ENCODE measurements at regions of chr12 and their contacts with region 1.

Region 1: DNA sequence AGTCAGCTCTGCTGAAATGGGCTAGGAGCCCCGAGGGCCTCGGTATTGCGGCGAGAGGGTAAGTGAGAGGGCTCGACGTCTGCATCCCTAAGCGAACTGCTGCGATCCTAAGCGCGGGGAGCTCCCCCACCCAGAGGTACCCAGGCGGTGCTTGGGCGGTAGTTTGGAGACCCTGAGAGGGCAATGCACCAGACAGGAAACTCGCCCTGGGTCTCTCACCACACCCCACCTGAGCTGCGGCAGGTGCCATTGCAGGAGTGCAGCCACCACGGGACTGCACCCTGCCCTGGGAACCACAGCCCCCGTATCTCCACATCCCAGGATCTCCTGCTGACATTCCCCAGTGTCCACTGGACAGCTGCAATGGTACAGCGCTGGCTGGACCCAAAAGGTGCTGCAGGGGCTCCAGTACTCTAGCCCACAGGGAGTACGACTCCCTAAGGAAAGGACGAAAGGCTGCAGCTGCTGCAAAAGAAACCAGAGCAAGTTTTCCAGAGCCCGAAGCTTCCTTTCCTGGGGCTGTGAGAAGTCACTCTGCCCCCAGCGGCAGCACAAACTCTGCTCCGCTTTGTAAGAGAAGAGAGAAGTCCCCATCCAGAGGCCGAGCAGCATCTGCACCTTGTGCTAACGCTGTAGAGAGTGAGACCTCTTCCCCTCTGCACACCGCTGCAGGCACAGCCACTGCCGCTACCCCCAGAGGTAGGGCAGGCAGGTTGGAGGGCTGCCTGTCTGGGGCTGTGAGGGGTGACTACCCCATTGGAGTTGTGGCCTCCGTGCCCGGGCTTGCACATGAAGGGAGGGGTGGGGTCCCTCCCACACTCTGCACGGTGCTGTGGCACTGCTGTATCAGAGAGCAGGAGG is 31.1 kb upstream of the MON2 start:
- DNase-seq: peak; percentile 8 to 38 (median 26)
- ATAC-seq: peak; percentile 77
- H3K4me3 ChIP-seq: peak overlapping the region; percentile 71
- H3K4me3 Mint-ChIP-seq: peak overlapping the region; percentile 79 to 93 (median 89)
- H3K27ac ChIP-seq: no peak overlapping the region
- H3K27ac Mint-ChIP-seq: peak overlapping the region in 3 of 9 donors; percentile 33 to 71 (median 36)
- H3K4me1 ChIP-seq: peaks cover 9 to 10% of the 10 kb centered on the region in 2 donors
- H3K4me1 Mint-ChIP-seq: peaks cover 9 to 24% (median 18%) of the 10 kb centered on the region in 7 donors
- H3K27me3 ChIP-seq: no peaks in the 10 kb centered on the region
- H3K27me3 Mint-ChIP-seq: peaks cover 19 to 67% (median 29%) of the 10 kb centered on the region in 5 donors

Region 2: GRCh38 chr12:61798778-61799177 is 636.8 kb before region 1 on chr12:
- CTCF ChIA-PET with region 1: no interaction called
- POLR2A ChIA-PET with region 1: no interaction called
- intact Hi-C with region 1: no loop called
- DNase-seq: no peak
- ATAC-seq: no peak
- H3K4me3 ChIP-seq: no peak overlapping the region
- H3K4me3 Mint-ChIP-seq: no peak overlapping the region
- H3K27ac ChIP-seq: no peak overlapping the region
- H3K27ac Mint-ChIP-seq: no peak overlapping the region
- H3K4me1 ChIP-seq: no peaks in the 10 kb centered on the region
- H3K4me1 Mint-ChIP-seq: no peaks in the 10 kb centered on the region
- H3K27me3 ChIP-seq: no peaks in the 10 kb centered on the region
- H3K27me3 Mint-ChIP-seq: no peaks in the 10 kb centered on the region

Region 3: DNA sequence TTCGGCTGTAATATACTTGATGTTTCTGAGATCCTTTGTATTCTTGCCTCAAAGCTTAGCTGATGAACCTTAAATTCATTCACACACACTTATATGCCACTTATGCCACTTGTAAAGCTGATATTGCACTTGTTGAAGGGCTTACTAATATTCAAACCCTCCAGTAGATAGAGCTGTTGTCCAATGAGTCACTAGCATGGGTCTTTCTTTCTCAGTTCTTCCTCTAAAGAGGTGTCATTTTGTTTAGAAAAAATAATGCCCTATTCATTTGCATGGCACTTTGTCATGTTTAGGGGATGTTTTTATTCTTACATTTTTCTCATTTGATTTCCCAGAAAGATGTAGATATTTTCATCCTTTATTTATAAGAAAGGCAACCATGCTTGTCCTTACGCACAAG is 87.5 kb after region 1 on chr12:
- CTCF ChIA-PET with region 1: no interaction called
- POLR2A ChIA-PET with region 1: no interaction called
- intact Hi-C with region 1: loop called in 1 of 2 experiments (anchors 2 kb)
- DNase-seq: no peak
- ATAC-seq: peak; percentile 31
- H3K4me3 ChIP-seq: no peak overlapping the region
- H3K4me3 Mint-ChIP-seq: no peak overlapping the region
- H3K27ac ChIP-seq: no peak overlapping the region
- H3K27ac Mint-ChIP-seq: peak overlapping the region in 5 of 9 donors; percentile 23 to 82 (median 67)
- H3K4me1 ChIP-seq: peaks cover 0 to 7% of the 10 kb centered on the region in 2 donors
- H3K4me1 Mint-ChIP-seq: peaks cover 13 to 64% (median 59%) of the 10 kb centered on the region in 7 donors
- H3K27me3 ChIP-seq: no peaks in the 10 kb centered on the region
- H3K27me3 Mint-ChIP-seq: no peaks in the 10 kb centered on the region

Region 4: DNA sequence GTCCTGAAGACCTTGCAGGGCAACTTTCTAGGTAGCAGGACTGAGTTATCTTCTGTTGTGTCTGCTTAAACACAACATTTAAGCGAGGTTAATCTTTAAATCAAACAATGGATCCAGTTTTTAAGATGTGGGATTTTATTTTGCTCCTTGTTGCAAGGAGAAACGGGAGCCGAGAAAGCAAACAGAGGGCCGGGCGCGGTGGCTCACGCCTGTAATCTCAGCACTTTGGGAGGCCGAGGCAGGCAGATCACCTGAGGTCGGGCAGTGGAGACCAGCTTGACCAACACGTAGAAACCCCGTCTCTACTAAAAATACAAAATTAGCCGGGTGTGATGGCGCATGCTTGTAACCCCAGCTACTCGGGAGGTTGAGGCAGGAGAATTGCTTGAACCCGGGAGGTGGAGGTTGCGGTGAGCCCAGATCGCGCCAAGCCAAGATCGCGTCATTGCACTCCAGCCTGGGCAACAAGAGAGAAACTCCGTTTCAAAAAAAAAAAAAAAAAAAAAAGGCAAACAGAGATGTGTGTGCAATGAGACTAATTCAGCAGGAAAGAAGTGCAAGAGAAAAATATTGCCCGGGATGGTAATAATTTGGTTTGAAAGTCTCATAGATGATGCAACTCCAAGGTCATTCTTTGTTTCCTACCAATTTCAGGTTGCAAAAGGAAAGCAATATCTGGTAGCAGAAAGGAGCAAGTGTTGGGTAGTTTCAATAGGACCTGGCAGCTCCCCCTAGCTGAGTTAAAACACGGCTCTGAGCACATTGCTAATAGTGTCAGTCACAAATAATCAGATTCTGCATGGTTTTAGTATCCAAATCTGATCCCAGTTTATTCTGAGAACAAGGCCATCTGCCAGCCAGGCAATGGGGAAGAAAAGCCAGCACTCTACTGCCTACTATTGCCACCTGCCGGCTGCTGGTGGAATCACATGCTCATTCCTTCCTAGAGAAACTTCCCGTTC is 358.0 kb after region 1 on chr12:
- CTCF ChIA-PET with region 1: interaction called, 59 read pairs
- POLR2A ChIA-PET with region 1: no interaction called
- intact Hi-C with region 1: loop called (anchors 1 kb)
- DNase-seq: peak; percentile 32 to 77 (median 62)
- ATAC-seq: peak; percentile 86
- H3K4me3 ChIP-seq: no peak overlapping the region
- H3K4me3 Mint-ChIP-seq: no peak overlapping the region
- H3K27ac ChIP-seq: no peak overlapping the region
- H3K27ac Mint-ChIP-seq: no peak overlapping the region
- H3K4me1 ChIP-seq: no peaks in the 10 kb centered on the region
- H3K4me1 Mint-ChIP-seq: peaks cover 0 to 4% (median 0%) of the 10 kb centered on the region in 7 donors
- H3K27me3 ChIP-seq: no peaks in the 10 kb centered on the region
- H3K27me3 Mint-ChIP-seq: peaks cover 0 to 21% (median 0%) of the 10 kb centered on the region in 5 donors

Region 5: GRCh38 chr12:62813031-62813829 is 377.7 kb after region 1 on chr12:
- CTCF ChIA-PET with region 1: interaction called, 9 read pairs
- POLR2A ChIA-PET with region 1: no interaction called
- intact Hi-C with region 1: loop called (anchors 1 kb)
- DNase-seq: peak in 4 of 9 donors; percentile 4 to 27 (median 10)
- ATAC-seq: peak; percentile 69
- H3K4me3 ChIP-seq: peak overlapping the region; percentile 4
- H3K4me3 Mint-ChIP-seq: peak overlapping the region in 9 of 10 donors; percentile 27 to 70 (median 61)
- H3K27ac ChIP-seq: no peak overlapping the region
- H3K27ac Mint-ChIP-seq: no peak overlapping the region
- H3K4me1 ChIP-seq: no peaks in the 10 kb centered on the region
- H3K4me1 Mint-ChIP-seq: peaks cover 0 to 25% (median 9%) of the 10 kb centered on the region in 7 donors
- H3K27me3 ChIP-seq: no peaks in the 10 kb centered on the region
- H3K27me3 Mint-ChIP-seq: peaks cover 4 to 26% (median 18%) of the 10 kb centered on the region in 5 donors